Activated CD4-positive, alpha-beta T cell treated with anti-CD3 and anti-CD28 coated beads, Interleukin-2, amount 10 ng/mL, durations not matched to agents 7 days and 5 days (primary cell): ENCODE measurements at regions of chr20 and their contacts with region 1.

Region 1: DNA sequence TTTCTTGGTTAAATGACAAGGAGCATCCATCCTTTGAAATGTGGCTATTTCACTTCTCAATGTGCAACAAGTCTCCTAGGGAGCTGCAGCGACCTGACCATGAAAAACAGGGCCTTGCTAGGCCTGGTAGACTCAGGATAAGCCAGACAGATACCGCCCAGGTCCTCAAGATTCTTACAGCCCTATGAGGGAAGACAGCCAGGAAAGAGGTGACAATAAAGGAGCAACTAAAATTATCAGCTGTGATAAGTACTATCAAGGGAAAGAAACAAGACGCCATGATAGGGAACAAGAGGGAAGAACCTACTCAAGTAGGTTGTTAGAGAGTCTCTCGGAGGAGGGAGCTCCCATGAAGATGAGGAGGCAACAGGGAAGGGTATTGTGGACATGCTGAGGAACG is 51.4 kb upstream of the EMILIN3 start:
- DNase-seq: no peak
- H3K4me3 Mint-ChIP-seq: no peak overlapping the region
- H3K27ac Mint-ChIP-seq: no peak overlapping the region
- H3K4me1 Mint-ChIP-seq: peaks cover 26% of the 10 kb centered on the region
- H3K27me3 Mint-ChIP-seq: no peaks in the 10 kb centered on the region

Region 2: DNA sequence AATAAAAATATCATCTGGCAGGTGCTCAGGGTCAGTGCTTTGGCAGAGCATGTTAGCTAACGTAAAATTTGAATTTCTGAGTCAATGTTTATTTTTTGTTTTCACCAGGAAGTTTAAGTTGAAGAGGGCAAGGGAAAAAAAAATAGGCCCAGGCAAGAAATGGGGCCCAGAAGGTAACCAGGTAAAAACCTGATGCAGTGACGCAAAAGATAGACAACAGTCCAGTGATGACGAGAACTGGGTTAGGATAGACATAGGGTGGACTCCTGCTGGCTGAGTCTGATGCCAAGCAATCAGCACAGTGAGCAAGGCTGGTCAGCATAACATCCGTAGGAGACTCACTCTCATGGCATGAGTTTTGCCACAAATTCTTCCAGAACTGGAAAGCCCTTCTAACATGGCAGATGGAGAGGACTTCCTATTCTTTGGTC is 142.7 kb before region 1 on chr20:
- CTCF ChIA-PET with region 1: no interaction called
- POLR2A ChIA-PET with region 1: no interaction called
- DNase-seq: no peak
- H3K4me3 Mint-ChIP-seq: no peak overlapping the region
- H3K27ac Mint-ChIP-seq: no peak overlapping the region
- H3K4me1 Mint-ChIP-seq: no peaks in the 10 kb centered on the region
- H3K27me3 Mint-ChIP-seq: no peaks in the 10 kb centered on the region

Region 3: GRCh38 chr20:41428285-41428684 is 10.3 kb after region 1 on chr20:
- CTCF ChIA-PET with region 1: interaction called, 11 read pairs
- POLR2A ChIA-PET with region 1: no interaction called
- DNase-seq: peak; percentile 66
- H3K4me3 Mint-ChIP-seq: no peak overlapping the region
- H3K27ac Mint-ChIP-seq: peak overlapping the region; percentile 88
- H3K4me1 Mint-ChIP-seq: peaks cover 50% of the 10 kb centered on the region
- H3K27me3 Mint-ChIP-seq: no peaks in the 10 kb centered on the region

Region 4: GRCh38 chr20:41443691-41444090 is 25.7 kb after region 1 on chr20:
- CTCF ChIA-PET with region 1: no interaction called
- POLR2A ChIA-PET with region 1: no interaction called
- DNase-seq: no peak
- H3K4me3 Mint-ChIP-seq: no peak overlapping the region
- H3K27ac Mint-ChIP-seq: peak overlapping the region; percentile 47
- H3K4me1 Mint-ChIP-seq: peaks cover 28% of the 10 kb centered on the region
- H3K27me3 Mint-ChIP-seq: no peaks in the 10 kb centered on the region